AG04450 (cell line): ENCODE measurements at regions of chr22 and their contacts with region 1.

Region 1: GRCh38 chr22:46563381-46564083 is 26.1 kb upstream of the CELSR1 start:
- DNase-seq: no peak
- H3K4me3 ChIP-seq: no peak overlapping the region
- H3K27ac ChIP-seq: no peak overlapping the region
- H3K27me3 ChIP-seq: no peaks in the 10 kb centered on the region
- CTCF ChIP-seq: peak; percentile 75

Region 2: DNA sequence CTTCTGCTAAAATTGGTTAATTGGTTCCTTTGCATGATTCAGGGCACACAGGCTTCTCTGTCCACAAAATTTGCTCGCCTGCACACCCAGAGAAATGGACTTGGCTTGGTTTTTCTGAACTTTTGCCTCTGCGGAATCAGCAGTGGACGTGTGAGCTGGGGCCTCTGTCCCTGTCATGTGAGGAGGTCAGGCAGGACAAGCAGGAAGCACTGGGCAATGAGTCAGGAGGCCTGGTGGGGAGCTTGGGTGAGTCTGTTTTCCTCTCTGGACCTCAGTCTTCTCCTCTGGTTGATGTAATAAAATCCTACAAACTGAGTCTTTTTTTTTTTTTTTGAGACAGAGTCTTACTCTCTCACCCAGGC is 15.7 kb before region 1 on chr22:
- CTCF ChIA-PET with region 1: interaction called, 17 read pairs
- POLR2A ChIA-PET with region 1: no interaction called
- DNase-seq: peak; percentile 47
- H3K4me3 ChIP-seq: no peak overlapping the region
- H3K27ac ChIP-seq: peak overlapping the region; percentile 74
- H3K27me3 ChIP-seq: peaks cover 4% of the 10 kb centered on the region
- CTCF ChIP-seq: no peak

Region 3: GRCh38 chr22:46619830-46620501 is 56.4 kb after region 1 on chr22 and contains the start of gene GRAMD4:
- CTCF ChIA-PET with region 1: no interaction called
- POLR2A ChIA-PET with region 1: no interaction called
- DNase-seq: no peak
- H3K4me3 ChIP-seq: no peak within 1 kb of the TSS
- H3K27ac ChIP-seq: no peak within 1 kb of the TSS
- H3K27me3 ChIP-seq: no peaks in the 10 kb centered on the region
- CTCF ChIP-seq: no peak
- polyA plus RNA-seq, gene GRAMD4: 7.5 and 8.2 TPM in 2 replicates

Region 4: DNA sequence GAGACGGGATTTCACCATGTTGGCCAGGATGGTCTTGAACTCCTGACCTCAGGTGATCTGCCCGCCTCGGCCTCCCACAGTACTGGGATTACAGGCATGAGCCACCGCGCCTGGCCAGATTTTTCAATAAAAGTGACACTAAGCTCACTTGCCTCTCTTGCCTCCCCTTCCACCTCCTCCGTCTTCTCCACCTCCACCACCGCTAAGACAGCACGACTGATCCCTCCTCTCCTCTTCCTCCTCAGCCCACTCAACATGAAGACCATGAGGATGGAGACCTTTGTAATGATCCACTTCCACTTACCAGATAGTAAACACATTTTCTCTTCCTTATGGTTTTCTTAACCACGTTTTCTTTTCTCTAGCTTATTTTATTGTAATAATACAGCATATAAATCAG is 160.3 kb after region 1 on chr22:
- CTCF ChIA-PET with region 1: interaction called, 17 read pairs
- POLR2A ChIA-PET with region 1: no interaction called
- DNase-seq: no peak
- H3K4me3 ChIP-seq: no peak overlapping the region
- H3K27ac ChIP-seq: no peak overlapping the region
- H3K27me3 ChIP-seq: no peaks in the 10 kb centered on the region
- CTCF ChIP-seq: no peak

Region 5: DNA sequence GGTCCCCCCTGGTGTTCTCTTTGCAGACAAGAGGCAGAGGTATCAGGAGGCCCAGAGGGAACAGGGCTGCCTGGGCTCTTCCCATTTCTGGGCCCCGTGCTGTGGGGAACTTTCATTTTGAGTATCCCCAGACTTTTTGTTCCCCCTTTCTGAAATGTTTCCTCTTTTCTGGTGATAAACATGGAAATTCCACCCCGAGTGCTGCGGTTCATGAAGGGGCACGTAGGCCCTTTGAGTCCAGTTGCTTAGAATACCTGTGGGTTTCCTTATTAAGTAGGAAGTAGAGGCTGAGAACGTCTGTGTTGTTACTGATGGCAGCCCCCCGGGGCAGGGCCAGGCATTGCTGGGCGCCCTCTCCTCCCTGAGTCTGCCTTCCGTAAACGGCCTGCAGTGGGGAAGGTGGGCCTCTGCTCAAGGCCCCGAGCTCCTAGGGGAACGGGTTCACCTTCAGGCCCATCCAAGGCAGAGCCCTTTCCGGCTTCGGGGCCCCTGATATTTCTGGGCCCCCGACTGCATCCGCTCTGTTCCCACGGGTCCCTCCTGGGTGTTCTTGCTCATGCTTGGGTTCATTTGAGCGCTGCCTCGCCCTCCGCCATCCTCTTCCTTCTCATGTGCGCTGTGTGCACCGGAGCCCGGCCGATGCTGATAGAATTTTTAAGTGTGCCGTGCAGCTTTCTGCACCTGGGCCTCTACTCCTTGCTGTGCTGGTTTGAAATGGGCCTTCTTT is 210.9 kb after region 1 on chr22:
- CTCF ChIA-PET with region 1: no interaction called
- POLR2A ChIA-PET with region 1: no interaction called
- DNase-seq: no peak
- H3K4me3 ChIP-seq: no peak overlapping the region
- H3K27ac ChIP-seq: peak overlapping the region; percentile 87
- H3K27me3 ChIP-seq: no peaks in the 10 kb centered on the region
- CTCF ChIP-seq: no peak